ENCODE measurements at regions of chr1 and their contacts with region 1.

Region 1: DNA sequence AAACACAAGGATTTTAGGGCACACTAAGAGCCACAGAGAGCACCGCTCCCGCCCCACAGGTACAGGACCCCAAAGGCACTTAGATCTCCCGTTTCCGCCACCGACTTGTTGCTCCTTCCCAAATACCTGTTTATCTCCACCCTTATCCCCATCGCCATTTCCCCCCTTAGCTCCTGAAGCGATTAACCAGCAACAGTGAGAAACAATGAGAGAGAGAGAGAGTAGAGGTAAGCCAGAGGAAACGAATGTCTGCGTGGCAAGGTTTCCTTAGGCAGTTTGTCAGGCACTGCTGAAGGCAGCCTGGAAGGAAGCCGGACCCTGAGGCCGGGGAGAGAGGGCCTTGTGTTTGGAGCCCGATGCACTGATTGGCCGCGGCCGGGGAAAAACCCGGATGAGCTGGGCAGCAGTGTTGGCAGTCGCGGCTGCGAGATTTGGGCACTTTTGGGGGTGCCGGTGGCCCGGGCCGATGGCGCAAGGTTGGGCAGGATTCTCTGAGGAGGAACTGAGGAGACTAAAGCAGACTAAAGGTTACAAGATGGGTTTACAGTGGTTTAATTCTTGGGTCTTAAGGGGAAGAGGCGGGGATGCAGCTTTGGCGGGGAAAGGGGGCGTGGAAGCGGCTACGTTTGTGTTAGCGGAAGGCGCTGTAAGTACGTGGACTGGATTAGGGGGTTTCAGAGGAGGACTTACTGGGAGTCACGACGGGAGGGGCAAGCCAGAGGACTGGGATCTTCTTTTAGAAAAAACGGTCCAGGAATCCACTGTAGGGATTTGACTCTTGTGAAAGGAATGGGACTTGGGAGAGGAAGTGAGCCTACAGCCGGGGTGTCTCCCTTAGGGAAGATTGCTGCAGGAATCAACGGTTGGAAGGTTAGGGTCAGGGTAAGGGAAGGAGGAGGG is at the start of gene GORAB:
- DNase-seq: peak; percentile 93
- H3K4me3 Mint-ChIP-seq: no peak within 1 kb of the TSS
- H3K27ac Mint-ChIP-seq: no peak within 1 kb of the TSS
- H3K4me1 Mint-ChIP-seq: peaks cover 13% of the 10 kb centered on the region
- H3K27me3 Mint-ChIP-seq: no peaks in the 10 kb centered on the region
- total RNA-seq, gene GORAB: 9.5 TPM

Region 2: GRCh38 chr1:169794530-169795416 is 737.2 kb before region 1 on chr1 and contains the start of gene METTL18:
- CTCF ChIA-PET with region 1: no interaction called
- intact Hi-C with region 1: loop called (anchors 1 kb)
- DNase-seq: peak; percentile 97
- H3K4me3 Mint-ChIP-seq: peak within 1 kb of the TSS; percentile 99
- H3K27ac Mint-ChIP-seq: peak within 1 kb of the TSS; percentile 99
- H3K4me1 Mint-ChIP-seq: peaks cover 48% of the 10 kb centered on the region
- H3K27me3 Mint-ChIP-seq: no peaks in the 10 kb centered on the region
- total RNA-seq, gene METTL18: 10.6 to 11.1 TPM

Region 3: DNA sequence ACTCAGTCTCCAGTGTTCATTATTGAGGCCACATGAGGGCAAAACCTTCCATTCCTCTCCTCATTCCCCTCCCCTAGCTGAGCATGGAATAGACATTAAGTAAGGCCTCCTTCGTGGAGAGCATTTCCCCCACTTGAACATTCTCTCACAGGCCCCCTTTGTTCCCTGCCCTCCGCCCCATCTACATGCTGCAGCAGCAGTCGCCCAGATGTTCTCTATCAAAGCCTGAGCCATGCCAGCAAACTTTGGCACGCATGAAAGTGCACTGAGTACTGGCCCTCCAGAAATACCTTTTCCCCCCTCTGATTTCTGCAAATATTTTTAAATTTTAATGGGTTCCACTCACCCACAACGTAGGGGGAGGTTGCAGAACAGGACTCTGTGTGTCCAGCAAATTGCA is 21.0 kb before region 1 on chr1:
- CTCF ChIA-PET with region 1: no interaction called
- intact Hi-C with region 1: no loop called
- DNase-seq: no peak
- H3K4me3 Mint-ChIP-seq: no peak overlapping the region
- H3K27ac Mint-ChIP-seq: no peak overlapping the region
- H3K4me1 Mint-ChIP-seq: no peaks in the 10 kb centered on the region
- H3K27me3 Mint-ChIP-seq: peaks cover 15% of the 10 kb centered on the region

Region 4: DNA sequence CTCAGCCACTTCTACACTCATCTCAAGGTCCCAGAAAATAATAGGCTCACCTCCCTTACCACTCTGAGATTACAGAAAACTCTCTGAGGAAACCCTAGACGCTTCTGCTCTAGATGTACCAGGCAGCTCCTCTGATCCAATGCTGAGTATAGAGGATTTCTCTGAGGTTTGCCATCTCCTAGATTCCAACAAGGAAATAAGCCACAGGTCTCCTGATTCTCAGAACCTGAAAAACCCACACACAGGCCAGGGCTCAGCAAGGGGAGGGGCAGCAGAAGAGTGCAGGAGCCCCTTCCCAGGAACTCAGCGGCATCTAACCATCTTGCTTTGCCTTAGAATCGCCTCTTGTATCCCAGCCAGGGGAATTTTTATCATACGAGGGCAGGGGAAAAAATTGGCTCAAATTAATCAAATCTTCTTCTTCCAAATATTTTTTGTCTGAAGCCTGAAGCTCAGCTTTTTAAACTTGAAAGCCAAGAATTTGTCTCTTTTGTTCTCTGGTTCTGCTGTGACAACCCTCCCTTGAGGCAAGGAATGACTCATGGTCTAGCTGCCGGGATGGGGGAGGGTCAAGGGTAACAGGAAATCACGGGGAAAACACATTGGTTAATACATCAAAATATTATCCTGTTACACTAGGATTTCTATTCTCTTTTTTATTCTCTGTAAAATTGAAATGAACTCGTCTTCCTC is 30.8 kb after region 1 on chr1:
- CTCF ChIA-PET with region 1: no interaction called
- intact Hi-C with region 1: loop called (anchors 1 kb)
- DNase-seq: peak; percentile 74
- H3K4me3 Mint-ChIP-seq: no peak overlapping the region
- H3K27ac Mint-ChIP-seq: peak overlapping the region; percentile 25
- H3K4me1 Mint-ChIP-seq: peaks cover 15% of the 10 kb centered on the region
- H3K27me3 Mint-ChIP-seq: peaks cover 1% of the 10 kb centered on the region

Region 5: GRCh38 chr1:170664828-170665612 is 133.0 kb after region 1 on chr1:
- CTCF ChIA-PET with region 1: no interaction called
- intact Hi-C with region 1: loop called (anchors 2 kb)
- DNase-seq: no peak
- H3K4me3 Mint-ChIP-seq: peak overlapping the region; percentile 27
- H3K27ac Mint-ChIP-seq: no peak overlapping the region
- H3K4me1 Mint-ChIP-seq: peaks cover 51% of the 10 kb centered on the region
- H3K27me3 Mint-ChIP-seq: peaks cover 81% of the 10 kb centered on the region